MCF 10A (cell line): ENCODE measurements at regions of chr20 and their contacts with region 1.

Region 1: GRCh38 chr20:38434743-38435554 is at the start of gene SNHG17:
- DNase-seq: peak; percentile 88
- H3K4me3 Mint-ChIP-seq: peak within 1 kb of the TSS; percentile 90
- H3K27ac Mint-ChIP-seq: peak within 1 kb of the TSS; percentile 92
- H3K4me1 Mint-ChIP-seq: peaks cover 22% of the 10 kb centered on the region
- H3K27me3 Mint-ChIP-seq: no peaks in the 10 kb centered on the region
- CTCF ChIP-seq: peak; percentile 99
- total RNA-seq, gene SNHG17: 83.6 and 133 TPM in 2 replicates

Region 2: GRCh38 chr20:38156888-38157634 is 277.9 kb before region 1 on chr20:
- CTCF ChIA-PET with region 1: no interaction called
- POLR2A ChIA-PET with region 1: no interaction called
- intact Hi-C with region 1: no loop called
- DNase-seq: peak; percentile 72
- H3K4me3 Mint-ChIP-seq: no peak overlapping the region
- H3K27ac Mint-ChIP-seq: peak overlapping the region; percentile 63
- H3K4me1 Mint-ChIP-seq: peaks cover 15% of the 10 kb centered on the region
- H3K27me3 Mint-ChIP-seq: no peaks in the 10 kb centered on the region
- CTCF ChIP-seq: no peak

Region 3: GRCh38 chr20:38406476-38406875 is 28.5 kb before region 1 on chr20:
- CTCF ChIA-PET with region 1: interaction called, 10 read pairs
- POLR2A ChIA-PET with region 1: interaction called, 3 read pairs
- intact Hi-C with region 1: no loop called
- DNase-seq: no peak
- H3K4me3 Mint-ChIP-seq: no peak overlapping the region
- H3K27ac Mint-ChIP-seq: no peak overlapping the region
- H3K4me1 Mint-ChIP-seq: no peaks in the 10 kb centered on the region
- H3K27me3 Mint-ChIP-seq: no peaks in the 10 kb centered on the region
- CTCF ChIP-seq: no peak

Region 4: GRCh38 chr20:38418509-38419204 is 16.3 kb before region 1 on chr20:
- CTCF ChIA-PET with region 1: interaction called, 14 read pairs
- POLR2A ChIA-PET with region 1: interaction called, 29 read pairs
- intact Hi-C with region 1: no loop called
- DNase-seq: peak; percentile 49
- H3K4me3 Mint-ChIP-seq: no peak overlapping the region
- H3K27ac Mint-ChIP-seq: no peak overlapping the region
- H3K4me1 Mint-ChIP-seq: no peaks in the 10 kb centered on the region
- H3K27me3 Mint-ChIP-seq: no peaks in the 10 kb centered on the region
- CTCF ChIP-seq: no peak

Region 5: GRCh38 chr20:38446441-38447209 is 11.7 kb after region 1 on chr20:
- CTCF ChIA-PET with region 1: interaction called, 152 read pairs
- POLR2A ChIA-PET with region 1: interaction called, 271 read pairs
- intact Hi-C with region 1: loop called (anchors 1 kb)
- DNase-seq: peak; percentile 85
- H3K4me3 Mint-ChIP-seq: peak overlapping the region; percentile 77
- H3K27ac Mint-ChIP-seq: peak overlapping the region; percentile 87
- H3K4me1 Mint-ChIP-seq: peaks cover 7% of the 10 kb centered on the region
- H3K27me3 Mint-ChIP-seq: peaks cover 12% of the 10 kb centered on the region
- CTCF ChIP-seq: peak; percentile 95

Region 6: DNA sequence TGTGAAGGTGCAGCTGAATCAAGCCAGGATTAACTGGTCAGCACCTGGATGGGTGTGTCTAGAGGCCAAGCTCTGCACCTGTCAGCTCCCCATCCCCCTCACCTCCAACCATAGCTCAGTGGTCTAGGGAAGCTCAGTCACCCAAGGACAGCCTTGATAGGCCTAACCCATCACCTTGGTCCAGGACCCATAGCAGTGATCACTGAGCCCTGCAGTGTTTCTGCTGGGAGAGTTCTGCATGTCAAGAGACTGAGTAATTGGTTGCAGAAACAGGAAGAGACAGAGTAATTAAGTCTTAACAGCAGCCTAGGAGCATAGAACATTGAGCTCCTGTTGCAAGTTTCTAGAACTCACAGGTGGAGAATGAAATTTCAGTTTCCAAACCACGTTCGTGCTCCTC is 19.0 kb after region 1 on chr20:
- CTCF ChIA-PET with region 1: interaction called, 152 read pairs
- POLR2A ChIA-PET with region 1: interaction called, 271 read pairs
- intact Hi-C with region 1: no loop called
- DNase-seq: no peak
- H3K4me3 Mint-ChIP-seq: no peak overlapping the region
- H3K27ac Mint-ChIP-seq: no peak overlapping the region
- H3K4me1 Mint-ChIP-seq: peaks cover 7% of the 10 kb centered on the region
- H3K27me3 Mint-ChIP-seq: no peaks in the 10 kb centered on the region
- CTCF ChIP-seq: no peak

Region 7: GRCh38 chr20:38523697-38524096 is 88.7 kb after region 1 on chr20:
- CTCF ChIA-PET with region 1: interaction called, 7 read pairs
- POLR2A ChIA-PET with region 1: interaction called, 19 read pairs
- intact Hi-C with region 1: no loop called
- DNase-seq: peak; percentile 71
- H3K4me3 Mint-ChIP-seq: no peak overlapping the region
- H3K27ac Mint-ChIP-seq: peak overlapping the region; percentile 3
- H3K4me1 Mint-ChIP-seq: peaks cover 14% of the 10 kb centered on the region
- H3K27me3 Mint-ChIP-seq: no peaks in the 10 kb centered on the region
- CTCF ChIP-seq: no peak

Region 8: DNA sequence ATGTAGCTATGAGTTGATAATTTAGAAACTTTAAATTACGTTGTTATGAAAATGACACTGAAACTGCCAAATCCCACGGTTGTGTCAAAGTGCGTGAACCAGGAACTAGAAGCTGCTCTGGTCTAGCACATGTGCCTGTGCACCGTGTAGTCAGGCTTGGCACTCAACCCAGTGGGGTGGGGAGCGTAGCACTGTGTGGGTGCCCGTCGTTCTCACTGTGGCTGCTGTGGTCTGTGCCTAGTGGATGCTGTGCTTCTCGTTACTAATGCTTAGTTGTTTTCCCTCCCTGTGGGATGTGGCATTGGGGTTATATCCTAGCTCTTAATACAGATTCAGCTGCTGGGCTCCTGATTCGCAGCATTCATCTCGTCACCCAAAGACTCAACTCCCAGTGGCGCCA is 99.8 kb after region 1 on chr20:
- CTCF ChIA-PET with region 1: interaction called, 5 read pairs
- POLR2A ChIA-PET with region 1: interaction called, 10 read pairs
- intact Hi-C with region 1: no loop called
- DNase-seq: no peak
- H3K4me3 Mint-ChIP-seq: no peak overlapping the region
- H3K27ac Mint-ChIP-seq: no peak overlapping the region
- H3K4me1 Mint-ChIP-seq: peaks cover 12% of the 10 kb centered on the region
- H3K27me3 Mint-ChIP-seq: no peaks in the 10 kb centered on the region
- CTCF ChIP-seq: no peak

Region 9: GRCh38 chr20:38590676-38591471 is 155.9 kb after region 1 on chr20:
- CTCF ChIA-PET with region 1: no interaction called
- POLR2A ChIA-PET with region 1: no interaction called
- intact Hi-C with region 1: no loop called
- DNase-seq: no peak
- H3K4me3 Mint-ChIP-seq: no peak overlapping the region
- H3K27ac Mint-ChIP-seq: no peak overlapping the region
- H3K4me1 Mint-ChIP-seq: no peaks in the 10 kb centered on the region
- H3K27me3 Mint-ChIP-seq: no peaks in the 10 kb centered on the region
- CTCF ChIP-seq: no peak

Region 10: GRCh38 chr20:38706501-38706900 is 271.6 kb after region 1 on chr20:
- CTCF ChIA-PET with region 1: no interaction called
- POLR2A ChIA-PET with region 1: no interaction called
- intact Hi-C with region 1: no loop called
- DNase-seq: no peak
- H3K4me3 Mint-ChIP-seq: no peak overlapping the region
- H3K27ac Mint-ChIP-seq: no peak overlapping the region
- H3K4me1 Mint-ChIP-seq: no peaks in the 10 kb centered on the region
- H3K27me3 Mint-ChIP-seq: peaks cover 54% of the 10 kb centered on the region
- CTCF ChIP-seq: no peak

Region 11: GRCh38 chr20:38907918-38908677 is 473.1 kb after region 1 on chr20:
- CTCF ChIA-PET with region 1: no interaction called
- POLR2A ChIA-PET with region 1: no interaction called
- intact Hi-C with region 1: no loop called
- DNase-seq: no peak
- H3K4me3 Mint-ChIP-seq: no peak overlapping the region
- H3K27ac Mint-ChIP-seq: no peak overlapping the region
- H3K4me1 Mint-ChIP-seq: no peaks in the 10 kb centered on the region
- H3K27me3 Mint-ChIP-seq: peaks cover 40% of the 10 kb centered on the region
- CTCF ChIP-seq: no peak